IMR-90 (cell line): ENCODE measurements at regions of chr10 and their contacts with region 1.

Region 1: DNA sequence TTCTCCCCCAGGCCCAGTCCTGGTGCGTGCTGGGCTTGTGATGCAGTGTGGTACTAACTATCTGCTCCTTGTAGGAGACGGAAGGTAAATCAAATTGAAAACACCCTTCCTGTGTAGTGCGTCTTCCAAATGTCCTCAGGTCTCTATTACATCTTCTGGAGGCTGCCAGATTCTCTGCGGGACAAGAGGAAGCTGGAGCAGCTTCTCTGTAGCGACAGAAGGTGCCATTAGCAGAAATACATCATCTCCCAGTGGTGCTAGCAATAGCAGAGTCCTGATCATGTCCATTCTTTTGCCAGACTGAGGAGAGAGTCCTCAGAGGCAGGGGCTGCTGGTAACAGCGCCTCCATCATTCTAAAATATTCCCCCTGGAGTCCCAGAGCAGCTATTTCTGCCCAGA is 675.2 kb downstream of the LRMDA start:
- DNase-seq: no peak
- ATAC-seq: no peak
- H3K4me3 ChIP-seq: no peak overlapping the region
- H3K27ac ChIP-seq: no peak overlapping the region
- H3K4me1 ChIP-seq: peaks cover 7% of the 10 kb centered on the region; the same call in 1 of the 2 replicates
- H3K27me3 ChIP-seq: no peaks in the 10 kb centered on the region; the same call in 1 of the 2 replicates
- CTCF ChIP-seq: no peak
- POLR2A ChIP-seq: no peak
- RAD21 ChIP-seq: no peak

Region 2: DNA sequence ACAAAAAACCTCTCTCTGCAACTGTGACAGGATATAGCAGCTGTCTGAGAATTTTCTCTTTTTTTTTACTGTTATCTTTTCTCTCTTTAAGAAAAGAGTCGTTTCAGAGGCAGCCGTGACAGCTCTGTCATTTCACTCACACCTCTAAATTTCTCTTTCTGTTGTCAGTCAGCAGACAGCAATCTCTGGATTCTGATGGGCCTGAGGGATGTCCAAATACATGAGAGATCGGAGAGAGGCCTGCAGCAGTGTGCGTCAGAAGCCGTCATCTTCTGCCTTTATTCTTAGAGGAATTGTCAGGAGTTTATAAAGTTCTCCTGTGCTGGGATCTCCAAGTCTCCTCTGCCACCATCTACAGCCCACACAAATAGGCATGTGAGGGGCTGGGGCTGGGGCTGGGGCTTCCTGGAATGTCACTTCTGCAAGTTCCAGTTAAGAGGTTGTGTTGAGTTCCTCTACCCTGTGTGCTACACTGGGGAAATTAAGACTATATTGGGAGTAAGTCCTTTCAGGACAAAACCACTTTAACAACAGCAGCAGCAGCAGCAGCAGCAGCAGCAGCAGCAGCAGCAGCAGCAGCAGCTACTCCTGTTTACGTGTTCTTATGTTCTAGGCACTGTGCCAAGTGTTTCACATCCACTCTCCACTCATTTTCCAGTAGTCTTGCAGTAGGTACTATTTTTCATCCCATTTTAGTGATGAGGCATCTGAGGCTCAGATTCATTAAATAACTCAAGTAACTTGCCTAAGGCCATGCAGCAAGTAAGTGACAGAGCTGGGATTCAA is 133.9 kb before region 1 on chr10:
- CTCF ChIA-PET with region 1: no interaction called
- POLR2A ChIA-PET with region 1: no interaction called
- dilution Hi-C with region 1: no loop called
- in situ Hi-C with region 1: no loop called
- intact Hi-C with region 1: no loop called
- DNase-seq: peak; percentile 52
- ATAC-seq: no peak
- H3K4me3 ChIP-seq: no peak overlapping the region
- H3K27ac ChIP-seq: no peak overlapping the region
- H3K4me1 ChIP-seq: no peaks in the 10 kb centered on the region
- H3K27me3 ChIP-seq: peaks cover 4% of the 10 kb centered on the region; the same call in 1 of the 2 replicates
- CTCF ChIP-seq: no peak
- POLR2A ChIP-seq: no peak
- RAD21 ChIP-seq: no peak

Region 3: DNA sequence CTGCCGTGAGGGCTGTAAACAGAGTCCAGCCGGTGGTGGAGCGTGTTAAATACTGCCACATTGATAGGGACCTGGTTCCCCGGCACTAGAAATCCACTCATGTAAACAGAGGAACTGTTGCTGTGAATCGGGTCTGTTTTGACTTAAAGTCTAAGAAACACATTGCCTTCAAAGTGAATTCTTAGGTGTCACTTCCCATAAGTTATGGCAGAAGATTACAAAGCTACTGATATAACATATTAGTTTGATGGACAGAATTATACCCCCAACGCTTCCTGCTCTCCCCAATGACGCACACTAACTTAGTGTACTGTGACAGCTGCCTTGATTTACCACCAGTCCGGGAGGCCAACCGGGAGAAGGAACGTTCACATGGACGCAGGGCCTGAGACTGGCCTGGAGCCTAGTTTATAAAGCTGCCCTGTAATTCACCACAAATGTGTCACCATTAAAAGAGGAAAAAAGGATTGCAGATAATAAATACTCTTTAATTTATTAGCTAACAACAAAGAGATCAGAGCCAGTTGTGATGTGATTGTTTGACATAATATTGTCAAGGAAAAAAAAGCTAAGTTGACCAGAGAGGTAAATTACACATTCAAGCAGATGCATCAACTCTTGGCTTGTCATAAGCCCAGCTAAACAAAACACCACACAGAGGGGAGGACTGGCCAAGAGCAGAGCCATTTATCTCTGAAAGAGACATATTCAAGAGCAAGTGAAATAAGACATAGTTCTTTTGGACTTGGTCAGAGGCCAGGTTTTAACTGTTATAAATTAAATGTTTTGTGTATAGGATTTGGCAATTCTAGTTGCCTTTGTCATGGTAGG is 145.4 kb after region 1 on chr10:
- CTCF ChIA-PET with region 1: no interaction called
- POLR2A ChIA-PET with region 1: no interaction called
- dilution Hi-C with region 1: no loop called
- in situ Hi-C with region 1: no loop called
- intact Hi-C with region 1: loop called (anchors 1 kb)
- DNase-seq: peak; percentile 93
- ATAC-seq: peak; percentile 84
- H3K4me3 ChIP-seq: no peak overlapping the region
- H3K27ac ChIP-seq: no peak overlapping the region
- H3K4me1 ChIP-seq: peaks cover 3% of the 10 kb centered on the region; the same call in 1 of the 2 replicates
- H3K27me3 ChIP-seq: no peaks in the 10 kb centered on the region
- CTCF ChIP-seq: no peak
- POLR2A ChIP-seq: no peak
- RAD21 ChIP-seq: no peak

Region 4: DNA sequence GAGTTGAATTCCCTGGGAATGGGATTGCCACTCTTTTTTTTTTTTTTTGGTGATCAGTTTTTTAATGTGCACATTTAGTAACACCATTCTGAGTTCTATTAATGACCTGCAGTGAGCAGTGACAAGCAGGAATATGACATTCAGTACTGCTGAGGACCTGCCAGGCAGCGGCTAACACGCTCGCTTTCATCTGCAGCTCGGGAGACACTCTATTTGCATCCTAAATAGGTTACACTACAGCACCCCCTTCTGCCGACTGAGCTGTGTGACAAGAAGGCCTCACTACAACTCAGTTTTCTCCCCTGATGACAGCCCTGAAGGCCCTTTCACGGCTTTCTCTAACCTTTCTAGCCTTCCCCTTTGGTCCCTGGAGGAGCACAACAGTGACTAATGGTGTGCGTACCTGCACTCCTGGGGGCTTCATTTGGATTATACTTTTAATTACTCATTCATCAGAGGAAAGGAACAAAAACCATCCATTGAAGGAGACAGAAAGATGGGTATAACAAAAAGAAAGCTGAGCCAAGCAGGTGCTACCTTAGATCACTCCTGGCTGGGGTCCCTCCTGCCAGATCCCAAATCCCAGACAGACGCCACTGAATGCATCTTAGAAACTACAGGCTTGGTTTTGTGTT is 197.2 kb after region 1 on chr10:
- CTCF ChIA-PET with region 1: interaction called, 5 read pairs
- POLR2A ChIA-PET with region 1: no interaction called
- dilution Hi-C with region 1: no loop called
- in situ Hi-C with region 1: no loop called
- intact Hi-C with region 1: loop called (anchors 2 kb)
- DNase-seq: peak; percentile 71
- ATAC-seq: peak; percentile 86
- H3K4me3 ChIP-seq: no peak overlapping the region
- H3K27ac ChIP-seq: no peak overlapping the region
- H3K4me1 ChIP-seq: peaks cover 9% of the 10 kb centered on the region
- H3K27me3 ChIP-seq: 0 out of 2 replicates have a peak, but pooled peaks cover 2% of the 10 kb centered on the region
- CTCF ChIP-seq: peak; percentile 55
- POLR2A ChIP-seq: no peak
- RAD21 ChIP-seq: peak; percentile 67

Region 5: GRCh38 chr10:76447578-76447977 is 341.0 kb after region 1 on chr10:
- CTCF ChIA-PET with region 1: no interaction called
- POLR2A ChIA-PET with region 1: no interaction called
- dilution Hi-C with region 1: no loop called
- in situ Hi-C with region 1: no loop called
- intact Hi-C with region 1: no loop called
- DNase-seq: no peak
- ATAC-seq: no peak
- H3K4me3 ChIP-seq: no peak overlapping the region
- H3K27ac ChIP-seq: no peak overlapping the region
- H3K4me1 ChIP-seq: peaks cover 4% of the 10 kb centered on the region; the same call in 1 of the 2 replicates
- H3K27me3 ChIP-seq: no peaks in the 10 kb centered on the region; the same call in 1 of the 2 replicates
- CTCF ChIP-seq: no peak
- POLR2A ChIP-seq: no peak
- RAD21 ChIP-seq: no peak

Region 6: GRCh38 chr10:76984559-76985443 is 878.2 kb after region 1 on chr10:
- CTCF ChIA-PET with region 1: no interaction called
- POLR2A ChIA-PET with region 1: no interaction called
- dilution Hi-C with region 1: no loop called
- in situ Hi-C with region 1: no loop called
- intact Hi-C with region 1: loop called (anchors 10 kb)
- DNase-seq: peak; percentile 79
- ATAC-seq: peak; percentile 85
- H3K4me3 ChIP-seq: no peak overlapping the region
- H3K27ac ChIP-seq: no peak overlapping the region
- H3K4me1 ChIP-seq: no peaks in the 10 kb centered on the region; the same call in 1 of the 2 replicates
- H3K27me3 ChIP-seq: peaks cover 3% of the 10 kb centered on the region; the same call in 1 of the 2 replicates
- CTCF ChIP-seq: peak; percentile 81
- POLR2A ChIP-seq: no peak
- RAD21 ChIP-seq: peak; percentile 72